ENCODE measurements at regions of chr1 and their contacts with region 1.

Region 1: GRCh38 chr1:208093754-208094719 is 150.1 kb downstream of the PLXNA2 start:
- DNase-seq: peak; percentile 67 to 74
- ATAC-seq: peak in 7 of 8 donors; percentile 35 to 70 (median 62)
- H3K4me3 ChIP-seq: no peak overlapping the region
- H3K27ac ChIP-seq: no peak overlapping the region
- H3K4me1 ChIP-seq: peaks cover 0 to 23% (median 20%) of the 10 kb centered on the region in 9 donors
- H3K27me3 ChIP-seq: no peaks in the 10 kb centered on the region
- CTCF ChIP-seq: peak; percentile 68 to 85 (median 78)

Region 2: GRCh38 chr1:208024406-208024805 is 69.6 kb before region 1 on chr1:
- intact Hi-C with region 1: loop called in 8 of 10 experiments (anchors 1 to 5 kb)
- DNase-seq: no peak
- ATAC-seq: no peak
- H3K4me3 ChIP-seq: no peak overlapping the region
- H3K27ac ChIP-seq: no peak overlapping the region
- H3K4me1 ChIP-seq: peaks cover 0 to 27% (median 7%) of the 10 kb centered on the region in 9 donors
- H3K27me3 ChIP-seq: no peaks in the 10 kb centered on the region
- CTCF ChIP-seq: no peak

Region 3: DNA sequence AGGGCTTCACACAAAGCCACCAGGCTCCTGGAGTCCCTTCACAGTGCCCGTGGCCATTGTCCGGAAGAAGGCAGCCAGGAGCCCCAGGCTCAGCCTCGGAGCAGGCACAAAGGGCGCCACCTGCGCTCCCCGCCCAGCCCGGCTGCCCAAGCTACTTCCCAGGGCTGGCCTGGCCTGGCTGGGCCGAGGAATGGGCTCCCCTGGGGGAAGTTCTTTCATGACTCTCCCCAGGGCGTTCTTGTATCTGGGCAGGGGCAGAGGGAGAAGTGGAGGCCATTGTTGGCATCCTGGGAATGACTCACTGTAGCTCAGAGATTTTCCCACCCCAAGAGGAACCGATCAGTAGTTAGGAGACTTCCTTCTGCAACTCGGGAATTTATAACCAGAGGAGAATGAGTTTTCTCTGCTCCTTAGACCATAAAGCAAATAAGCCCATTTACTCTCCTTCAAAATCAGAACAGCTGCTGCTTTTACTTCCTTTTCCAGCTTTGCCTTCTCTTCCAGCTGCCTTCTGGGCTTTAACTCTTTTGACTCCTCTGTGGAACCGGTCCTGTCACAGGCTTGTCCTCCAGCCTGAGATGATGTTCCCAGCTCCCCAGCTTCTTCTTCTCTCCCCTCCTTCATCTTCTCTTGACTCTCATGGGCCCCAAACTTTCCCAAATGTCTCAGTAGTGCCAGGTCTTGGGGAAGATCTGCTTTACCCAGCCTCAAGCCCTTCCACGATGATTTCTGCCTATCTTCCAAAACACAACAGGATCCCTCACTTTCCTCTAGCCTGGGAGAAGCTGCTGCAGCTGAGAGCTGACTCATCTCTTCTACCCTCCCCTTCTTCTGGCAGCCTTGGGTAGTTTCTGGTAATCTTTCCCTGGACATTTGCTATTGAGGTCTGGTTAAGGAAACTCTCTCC is 64.4 kb before region 1 on chr1:
- intact Hi-C with region 1: loop called in 6 of 10 experiments (anchors 5 kb)
- DNase-seq: peak in 1 of 2 donors; percentile 44
- ATAC-seq: peak; percentile 55 to 77 (median 66)
- H3K4me3 ChIP-seq: peak overlapping the region in 3 of 10 donors; percentile 9 to 13 (median 11)
- H3K27ac ChIP-seq: peak overlapping the region; percentile 48 to 90 (median 78)
- H3K4me1 ChIP-seq: peaks cover 0 to 48% (median 17%) of the 10 kb centered on the region in 9 donors
- H3K27me3 ChIP-seq: no peaks in the 10 kb centered on the region
- CTCF ChIP-seq: no peak

Region 4: GRCh38 chr1:208036109-208036808 is 57.8 kb before region 1 on chr1:
- intact Hi-C with region 1: loop called in 2 of 10 experiments (anchors 5 kb)
- DNase-seq: no peak
- ATAC-seq: peak in 3 of 8 donors; percentile 34 to 57 (median 45)
- H3K4me3 ChIP-seq: no peak overlapping the region
- H3K27ac ChIP-seq: no peak overlapping the region
- H3K4me1 ChIP-seq: peaks cover 0 to 12% (median under 1%) of the 10 kb centered on the region in 9 donors
- H3K27me3 ChIP-seq: no peaks in the 10 kb centered on the region
- CTCF ChIP-seq: peak in 7 of 9 donors; percentile 26 to 53 (median 39)

Region 5: GRCh38 chr1:208043691-208044181 is 50.3 kb before region 1 on chr1:
- intact Hi-C with region 1: loop called in 2 of 10 experiments (anchors 5 kb)
- DNase-seq: peak in 1 of 2 donors; percentile 33
- ATAC-seq: peak in 4 of 8 donors; percentile 16 to 72 (median 42)
- H3K4me3 ChIP-seq: no peak overlapping the region
- H3K27ac ChIP-seq: no peak overlapping the region
- H3K4me1 ChIP-seq: peaks cover 0 to 30% (median 18%) of the 10 kb centered on the region in 9 donors
- H3K27me3 ChIP-seq: no peaks in the 10 kb centered on the region
- CTCF ChIP-seq: no peak